Left colon (tissue), 2 donors: ENCODE measurements at regions of chr10 and their contacts with region 1.

Region 1: DNA sequence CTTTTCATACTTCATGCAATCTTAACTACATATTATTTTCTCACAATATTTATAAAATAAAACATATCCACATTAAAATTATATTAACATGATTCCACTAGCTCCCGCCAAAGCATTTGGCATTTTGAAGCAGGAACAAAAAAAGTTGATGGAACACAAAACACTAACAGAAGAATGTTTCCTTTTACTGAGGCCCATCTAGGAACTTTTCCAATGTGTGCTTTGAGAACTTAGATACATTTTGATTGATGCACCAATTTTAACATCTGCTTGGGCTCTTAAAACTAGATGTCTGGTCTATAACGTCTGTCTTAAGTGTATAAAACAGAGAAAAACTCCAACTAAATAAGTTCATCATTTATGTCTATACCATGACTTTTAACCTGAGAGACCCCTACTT is 1214.8 kb downstream of the SORCS1 start:
- DNase-seq: no peak
- ATAC-seq: no peak

Region 2: GRCh38 chr10:105644091-105644490 is 305.6 kb before region 1 on chr10:
- intact Hi-C with region 1: no loop called
- DNase-seq: peak; percentile 24
- ATAC-seq: peak; percentile 43

Region 3: GRCh38 chr10:105875050-105875449 is 74.7 kb before region 1 on chr10:
- intact Hi-C with region 1: no loop called
- DNase-seq: no peak
- ATAC-seq: no peak

Region 4: DNA sequence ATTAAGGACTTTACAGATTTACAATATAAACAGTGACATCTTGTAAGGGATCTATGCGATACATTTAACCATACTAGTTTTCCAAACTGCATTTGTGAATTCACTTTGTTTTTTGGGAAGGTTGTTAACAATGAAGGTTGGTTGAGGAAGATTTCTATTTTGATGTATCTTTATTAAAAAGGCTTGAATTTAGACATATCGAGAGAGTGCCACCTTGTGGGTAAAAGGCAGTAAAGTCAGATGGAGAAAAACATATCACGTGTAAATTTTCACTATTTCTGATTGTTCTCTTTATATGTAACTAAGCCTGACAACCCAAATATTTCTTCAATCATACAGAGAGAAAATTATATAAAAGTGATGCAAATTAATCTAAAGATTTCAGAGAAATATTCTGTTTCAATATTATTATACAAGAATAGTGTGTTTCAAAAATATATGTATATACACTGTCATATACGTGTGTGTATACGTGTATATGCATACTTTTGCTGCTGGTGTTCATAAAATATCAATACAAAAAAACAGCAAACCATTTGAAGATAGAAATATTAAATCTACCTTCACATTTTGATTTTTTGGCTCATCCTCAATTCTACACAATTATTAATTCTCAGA is 226.1 kb after region 1 on chr10:
- intact Hi-C with region 1: loop called in 1 of 2 experiments (anchors 10 kb)
- DNase-seq: no peak
- ATAC-seq: no peak